ENCODE measurements at regions of chr18 and their contacts with region 1.

Region 1: GRCh38 chr18:31610286-31611205 is 18.9 kb downstream of the TTR start:
- DNase-seq: no peak
- ATAC-seq: peak; percentile 75

Region 2: DNA sequence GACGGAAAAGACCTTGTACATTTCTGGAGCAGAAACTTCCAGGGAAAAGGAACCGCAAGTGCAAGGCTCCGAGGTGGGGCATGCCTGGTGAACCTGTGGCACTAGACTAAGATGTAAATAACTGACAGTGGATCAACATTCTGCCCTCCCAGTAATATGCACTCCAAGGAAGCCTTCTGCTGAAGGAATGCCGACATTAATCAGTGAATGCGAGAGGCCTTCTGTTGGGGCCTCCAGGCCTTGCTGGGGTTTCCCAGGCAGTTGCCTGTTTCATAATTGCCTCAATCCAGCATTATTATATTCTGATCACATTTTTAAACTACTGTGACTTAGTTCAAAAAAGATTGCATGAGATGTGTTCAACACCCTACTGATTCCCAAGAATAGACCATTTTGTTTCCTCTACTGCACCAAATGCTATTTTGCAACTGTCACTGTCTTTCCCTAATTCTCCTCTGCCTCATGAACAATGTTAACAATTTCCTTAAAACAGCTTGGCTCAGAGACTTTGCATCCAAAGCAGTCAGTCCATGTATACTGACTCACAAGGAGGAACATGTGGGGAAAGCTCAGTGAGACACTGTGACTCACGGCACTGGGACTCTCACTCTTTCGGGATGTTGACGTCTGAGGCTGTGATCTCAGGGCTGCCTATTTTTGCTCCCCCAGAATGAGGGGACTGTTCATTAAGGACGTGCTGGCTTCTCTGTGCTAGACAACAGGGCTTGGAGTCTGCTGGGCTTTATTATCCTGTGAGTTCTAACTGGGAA is 123.1 kb before region 1 on chr18:
- intact Hi-C with region 1: no loop called
- DNase-seq: no peak
- ATAC-seq: no peak

Region 3: GRCh38 chr18:31563778-31564177 is 46.8 kb before region 1 on chr18:
- intact Hi-C with region 1: loop called (anchors 5 kb)
- DNase-seq: no peak
- ATAC-seq: no peak

Region 4: DNA sequence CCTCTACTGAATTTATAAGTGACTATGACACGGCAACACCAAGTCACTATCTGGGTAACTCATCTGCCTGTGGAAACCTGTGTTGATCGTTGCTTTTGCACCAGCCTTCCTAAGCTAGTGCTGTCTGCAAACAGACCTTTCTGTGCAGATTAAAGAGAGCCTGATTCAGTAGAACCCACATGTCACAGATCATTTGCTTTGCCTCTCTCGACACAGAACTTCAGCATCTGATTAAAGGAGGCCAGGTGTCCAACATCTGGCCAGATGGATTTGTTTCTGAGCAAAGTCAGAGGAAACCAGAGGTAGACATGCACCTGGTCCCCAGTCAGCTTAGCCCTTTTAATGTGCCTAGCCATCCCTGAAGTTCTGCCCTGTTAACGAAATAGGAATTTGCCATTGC is 33.9 kb before region 1 on chr18:
- intact Hi-C with region 1: loop called (anchors 5 kb)
- DNase-seq: no peak
- ATAC-seq: no peak

Region 5: DNA sequence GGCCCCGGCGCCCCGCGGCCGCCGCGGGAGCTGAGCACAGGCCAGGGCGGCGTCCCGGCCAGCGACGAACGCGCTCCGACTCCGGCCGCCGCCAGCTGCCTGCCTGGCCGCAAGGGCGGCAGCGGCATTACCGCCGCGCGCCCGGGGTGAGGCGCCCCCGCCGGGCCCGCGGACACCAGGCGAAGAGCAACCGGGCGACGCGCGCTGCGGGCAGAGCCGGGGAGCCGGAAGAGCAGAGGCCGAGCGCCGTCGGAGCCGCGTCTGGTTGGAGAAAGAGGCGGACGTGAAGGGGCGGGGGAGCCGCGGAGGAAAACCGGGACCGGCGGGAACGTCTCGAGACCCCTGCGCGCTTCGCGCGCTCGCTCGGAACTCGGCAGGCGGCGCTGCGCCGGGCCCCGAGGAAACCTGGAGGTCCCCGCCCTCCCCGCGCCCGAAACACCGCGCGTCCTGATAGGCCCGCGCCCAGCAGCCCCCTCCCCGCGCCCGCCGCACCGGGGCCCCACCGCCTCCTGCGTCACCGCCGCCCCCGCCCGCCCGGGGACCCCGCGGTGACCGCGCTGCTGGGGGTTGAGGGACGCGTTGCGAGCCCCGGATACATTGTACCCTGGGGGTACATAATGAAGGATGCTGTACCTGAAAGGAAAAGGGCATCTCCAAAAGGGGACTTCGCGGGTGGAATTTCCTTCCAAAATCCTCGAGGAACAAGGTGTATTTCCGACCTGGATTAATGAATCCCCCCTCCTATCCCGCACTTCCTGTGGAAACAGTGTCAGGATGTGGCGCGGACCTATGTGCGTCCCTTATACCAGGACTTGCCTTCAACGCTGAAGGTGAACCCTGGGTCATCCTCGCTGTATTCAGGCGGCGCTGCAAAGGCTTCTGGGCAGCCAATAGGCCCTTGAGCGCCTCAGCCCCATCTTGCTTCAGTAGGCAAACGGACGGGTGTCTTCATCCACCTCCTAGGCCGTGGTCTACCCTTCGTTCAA is 74.8 kb after region 1 on chr18:
- intact Hi-C with region 1: loop called (anchors 5 kb)
- DNase-seq: peak; percentile 86
- ATAC-seq: peak; percentile 88